ENCODE measurements at regions of chr6 and their contacts with region 1.

Region 1: DNA sequence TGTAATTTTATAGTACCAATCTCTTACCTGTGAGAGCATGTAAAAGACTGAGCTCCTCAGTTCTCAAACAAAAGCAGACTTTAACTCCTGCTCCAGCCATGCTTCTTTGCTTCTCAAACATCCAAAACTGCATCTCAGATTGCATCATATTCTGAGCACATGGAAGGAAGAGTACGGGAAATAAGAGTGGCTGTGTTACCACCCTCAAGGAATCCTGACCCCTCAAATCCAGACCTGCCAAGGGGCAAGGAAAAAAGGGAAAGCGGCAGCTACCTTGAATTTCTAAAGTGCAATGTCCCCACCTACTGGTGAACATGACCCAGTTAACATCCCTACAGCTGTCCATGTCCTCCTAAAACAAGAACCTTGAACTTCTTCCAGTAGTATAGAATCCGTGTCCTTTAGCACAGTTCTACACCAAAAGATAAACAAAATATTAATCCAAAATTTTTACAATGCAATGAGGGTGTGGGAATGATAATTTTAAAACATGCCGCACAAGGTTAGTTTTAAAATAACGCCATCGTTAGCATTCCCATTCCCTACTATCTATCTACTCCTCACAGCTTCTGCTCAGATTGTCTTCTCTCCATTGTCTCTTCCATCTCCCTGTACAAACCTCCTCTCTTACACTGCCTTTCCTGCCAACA is 34.1 kb upstream of the HLA-DQB1 start:
- DNase-seq: peak; percentile 31 to 67
- H3K4me3 ChIP-seq: no peak overlapping the region
- H3K4me3 Mint-ChIP-seq: no peak overlapping the region
- H3K27ac Mint-ChIP-seq: no peak overlapping the region
- H3K4me1 ChIP-seq: no peaks in the 10 kb centered on the region
- H3K4me1 Mint-ChIP-seq: no peaks in the 10 kb centered on the region
- H3K27me3 ChIP-seq: no peaks in the 10 kb centered on the region
- H3K27me3 Mint-ChIP-seq: peaks cover 10% of the 10 kb centered on the region
- CTCF ChIP-seq: peak; percentile 28 to 41

Region 2: GRCh38 chr6:31952140-31952805 is 748.2 kb before region 1 on chr6:
- CTCF ChIA-PET with region 1: no interaction called
- POLR2A ChIA-PET with region 1: no interaction called
- intact Hi-C with region 1: no loop called
- DNase-seq: peak; percentile 65 to 80
- H3K4me3 ChIP-seq: no peak overlapping the region
- H3K4me3 Mint-ChIP-seq: no peak overlapping the region
- H3K27ac Mint-ChIP-seq: no peak overlapping the region
- H3K4me1 ChIP-seq: peaks cover 7% of the 10 kb centered on the region
- H3K4me1 Mint-ChIP-seq: peaks cover 24% of the 10 kb centered on the region
- H3K27me3 ChIP-seq: no peaks in the 10 kb centered on the region
- H3K27me3 Mint-ChIP-seq: no peaks in the 10 kb centered on the region
- CTCF ChIP-seq: peak; percentile 70 to 91

Region 3: DNA sequence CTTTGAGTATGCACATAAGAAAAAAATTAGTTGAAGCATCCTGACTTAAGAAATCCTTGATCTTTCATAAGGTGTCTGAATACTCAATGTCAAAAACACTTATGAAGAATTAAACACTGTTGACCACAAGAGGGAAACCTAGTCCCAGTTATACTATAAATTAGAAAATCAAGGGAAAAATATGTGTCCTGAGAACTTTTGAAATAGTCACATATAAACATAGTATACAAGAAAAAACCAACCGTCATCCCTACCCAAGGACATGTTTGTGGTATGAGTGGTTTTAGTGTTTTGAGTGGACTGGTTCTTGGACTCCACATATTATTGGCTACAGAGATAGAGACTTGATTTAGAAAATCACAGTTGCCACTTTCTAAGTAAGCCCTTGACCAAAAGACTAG is 268.5 kb before region 1 on chr6:
- CTCF ChIA-PET with region 1: no interaction called
- POLR2A ChIA-PET with region 1: no interaction called
- intact Hi-C with region 1: loop called (anchors 5 kb)
- DNase-seq: no peak
- H3K4me3 ChIP-seq: no peak overlapping the region
- H3K4me3 Mint-ChIP-seq: no peak overlapping the region
- H3K27ac Mint-ChIP-seq: no peak overlapping the region
- H3K4me1 ChIP-seq: no peaks in the 10 kb centered on the region
- H3K4me1 Mint-ChIP-seq: no peaks in the 10 kb centered on the region
- H3K27me3 ChIP-seq: no peaks in the 10 kb centered on the region
- H3K27me3 Mint-ChIP-seq: peaks cover 15% of the 10 kb centered on the region
- CTCF ChIP-seq: peak; percentile 11 to 50

Region 4: DNA sequence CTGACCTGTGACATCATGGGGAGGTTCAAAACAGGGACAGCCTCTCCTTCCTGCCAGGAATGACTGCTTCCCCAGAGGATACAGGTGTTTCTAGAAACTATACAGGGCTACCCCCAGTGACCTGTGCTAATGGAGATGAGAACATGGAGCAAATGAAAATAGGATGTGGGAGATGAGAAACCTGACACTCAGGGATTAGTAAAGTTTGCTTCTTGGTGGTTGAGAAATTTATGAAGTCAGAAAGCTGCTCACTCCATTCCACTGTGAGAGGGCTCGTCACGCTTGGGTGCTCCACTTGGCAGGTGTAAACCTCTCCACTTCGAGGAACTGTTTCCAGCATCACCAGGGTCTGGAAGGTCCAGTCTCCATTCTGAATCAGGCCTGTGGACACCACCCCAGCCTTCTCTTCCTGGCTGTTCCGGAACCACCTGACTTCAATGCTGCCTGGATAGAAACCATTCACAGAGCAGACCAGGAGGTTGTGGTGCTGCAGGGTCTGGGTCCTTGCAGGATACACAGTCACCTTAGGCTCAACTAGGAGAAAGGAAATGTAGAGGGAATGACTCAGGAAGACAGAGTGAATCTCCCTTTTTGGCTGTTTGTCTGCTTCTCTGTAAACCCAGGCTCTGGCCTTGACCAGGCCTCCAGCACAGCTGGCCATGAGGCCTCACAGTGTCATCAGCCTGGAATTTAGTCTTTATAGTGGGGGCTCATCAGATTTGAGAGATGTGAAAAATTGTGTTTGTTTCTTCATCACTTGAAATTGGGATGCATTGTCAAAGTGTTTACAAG is 181.2 kb before region 1 on chr6:
- CTCF ChIA-PET with region 1: no interaction called
- POLR2A ChIA-PET with region 1: no interaction called
- intact Hi-C with region 1: no loop called
- DNase-seq: no peak
- H3K4me3 ChIP-seq: no peak overlapping the region
- H3K4me3 Mint-ChIP-seq: no peak overlapping the region
- H3K27ac Mint-ChIP-seq: no peak overlapping the region
- H3K4me1 ChIP-seq: no peaks in the 10 kb centered on the region
- H3K4me1 Mint-ChIP-seq: no peaks in the 10 kb centered on the region
- H3K27me3 ChIP-seq: no peaks in the 10 kb centered on the region
- H3K27me3 Mint-ChIP-seq: peaks cover 6% of the 10 kb centered on the region
- CTCF ChIP-seq: no peak

Region 5: GRCh38 chr6:32666420-32667300 is 33.9 kb before region 1 on chr6 and contains the start of gene HLA-DQB1:
- CTCF ChIA-PET with region 1: no interaction called
- POLR2A ChIA-PET with region 1: no interaction called
- intact Hi-C with region 1: loop called (anchors 5 kb)
- DNase-seq: no peak
- H3K4me3 ChIP-seq: no peak within 1 kb of the TSS
- H3K4me3 Mint-ChIP-seq: no peak within 1 kb of the TSS
- H3K27ac Mint-ChIP-seq: no peak within 1 kb of the TSS
- H3K4me1 ChIP-seq: no peaks in the 10 kb centered on the region
- H3K4me1 Mint-ChIP-seq: no peaks in the 10 kb centered on the region
- H3K27me3 ChIP-seq: no peaks in the 10 kb centered on the region
- H3K27me3 Mint-ChIP-seq: peaks cover 11% of the 10 kb centered on the region
- CTCF ChIP-seq: no peak
- total RNA-seq, gene HLA-DQB1: not detected in 2 replicates

Region 6: DNA sequence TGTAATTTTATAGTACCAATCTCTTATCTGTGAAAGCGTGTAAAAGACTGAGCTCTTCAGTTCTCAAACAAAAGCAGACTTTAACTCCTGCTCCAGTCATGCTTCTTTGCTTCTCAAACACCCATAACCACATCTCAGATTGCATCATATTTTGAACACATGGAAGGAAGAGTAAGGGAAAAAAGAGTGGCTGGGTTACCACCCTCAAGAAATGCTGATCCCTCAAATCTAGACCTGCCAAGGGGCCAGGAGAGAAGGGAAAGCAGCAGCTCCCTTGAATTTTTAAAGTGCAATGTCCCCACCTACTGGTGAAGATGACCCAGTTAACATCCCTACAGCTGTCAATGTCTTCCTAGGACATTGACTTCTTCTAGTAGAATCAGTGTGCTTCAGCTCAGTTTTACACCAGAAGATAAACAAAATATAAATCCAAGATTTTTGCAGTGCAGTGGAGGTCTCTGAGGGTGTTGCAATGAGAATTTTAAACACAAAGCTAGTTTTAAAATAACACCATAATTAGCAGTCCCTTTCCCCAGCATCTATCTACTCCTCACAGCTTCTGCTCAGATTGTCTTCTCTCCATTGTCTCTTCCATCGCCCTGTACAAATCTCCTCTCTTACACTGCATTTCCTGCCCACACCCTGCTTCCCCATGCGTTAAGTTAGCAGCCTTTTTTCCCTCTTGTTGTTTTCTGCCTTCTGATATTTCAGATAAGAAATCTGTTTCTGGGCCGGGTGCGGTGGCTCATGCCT is 85.4 kb after region 1 on chr6:
- CTCF ChIA-PET with region 1: interaction called, 11 read pairs
- POLR2A ChIA-PET with region 1: no interaction called
- intact Hi-C with region 1: loop called (anchors 5 kb)
- DNase-seq: peak; percentile 48 to 66
- H3K4me3 ChIP-seq: no peak overlapping the region
- H3K4me3 Mint-ChIP-seq: no peak overlapping the region
- H3K27ac Mint-ChIP-seq: no peak overlapping the region
- H3K4me1 ChIP-seq: no peaks in the 10 kb centered on the region
- H3K4me1 Mint-ChIP-seq: no peaks in the 10 kb centered on the region
- H3K27me3 ChIP-seq: no peaks in the 10 kb centered on the region
- H3K27me3 Mint-ChIP-seq: peaks cover 5% of the 10 kb centered on the region
- CTCF ChIP-seq: peak; percentile 56 to 71